Left cardiac atrium (tissue), 4 donors: ENCODE measurements at regions of chr6 and their contacts with region 1.

Region 1: GRCh38 chr6:97394160-97394748 is 111.2 kb upstream of the MMS22L start:
- DNase-seq: no peak
- ATAC-seq: peak; percentile 38 to 49

Region 2: DNA sequence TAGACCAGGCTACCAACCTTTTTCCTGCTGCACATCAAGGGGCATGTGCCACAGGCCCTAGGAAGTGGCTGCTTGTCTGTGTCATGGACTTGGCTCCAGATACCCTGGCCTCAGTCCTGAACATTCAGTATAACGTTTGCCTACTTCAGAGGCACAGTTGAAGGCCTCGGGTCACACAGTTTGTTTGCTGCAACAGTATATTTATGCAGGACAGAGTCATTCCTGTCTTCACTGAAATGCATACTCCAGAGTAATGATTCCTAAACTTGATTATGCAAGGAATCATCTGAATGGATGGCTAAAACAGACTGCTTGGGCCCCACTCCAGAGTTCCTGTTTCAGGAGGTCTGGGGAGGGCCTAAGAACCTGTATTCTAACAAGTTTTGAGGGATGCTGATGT is 320.4 kb before region 1 on chr6:
- intact Hi-C with region 1: loop called in 1 of 2 experiments (anchors 5 kb)
- DNase-seq: no peak
- ATAC-seq: no peak

Region 3: GRCh38 chr6:97186416-97186999 is 207.7 kb before region 1 on chr6:
- intact Hi-C with region 1: loop called (anchors 2 to 10 kb)
- DNase-seq: peak; percentile 70
- ATAC-seq: peak in 1 of 2 donors; percentile 43

Region 4: DNA sequence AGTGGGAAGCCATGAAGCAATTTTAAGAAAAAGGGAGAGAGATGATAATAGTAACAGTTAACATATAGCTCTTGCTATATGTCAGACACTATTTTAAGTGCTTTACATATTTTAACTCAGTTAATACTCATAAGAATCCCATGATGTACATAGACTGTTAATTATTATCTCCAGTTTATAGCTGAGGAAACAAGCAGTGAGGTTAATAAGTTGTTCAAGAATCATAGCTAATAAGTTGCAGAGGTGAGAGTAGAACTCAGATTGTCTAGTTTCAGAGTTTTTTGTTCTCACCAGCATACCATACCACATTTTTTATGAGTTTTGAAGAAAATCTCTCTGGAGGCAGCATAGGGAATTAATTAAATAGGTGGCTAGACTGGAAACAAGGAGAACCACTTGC is 33.4 kb after region 1 on chr6:
- intact Hi-C with region 1: no loop called
- DNase-seq: no peak
- ATAC-seq: no peak

Region 5: DNA sequence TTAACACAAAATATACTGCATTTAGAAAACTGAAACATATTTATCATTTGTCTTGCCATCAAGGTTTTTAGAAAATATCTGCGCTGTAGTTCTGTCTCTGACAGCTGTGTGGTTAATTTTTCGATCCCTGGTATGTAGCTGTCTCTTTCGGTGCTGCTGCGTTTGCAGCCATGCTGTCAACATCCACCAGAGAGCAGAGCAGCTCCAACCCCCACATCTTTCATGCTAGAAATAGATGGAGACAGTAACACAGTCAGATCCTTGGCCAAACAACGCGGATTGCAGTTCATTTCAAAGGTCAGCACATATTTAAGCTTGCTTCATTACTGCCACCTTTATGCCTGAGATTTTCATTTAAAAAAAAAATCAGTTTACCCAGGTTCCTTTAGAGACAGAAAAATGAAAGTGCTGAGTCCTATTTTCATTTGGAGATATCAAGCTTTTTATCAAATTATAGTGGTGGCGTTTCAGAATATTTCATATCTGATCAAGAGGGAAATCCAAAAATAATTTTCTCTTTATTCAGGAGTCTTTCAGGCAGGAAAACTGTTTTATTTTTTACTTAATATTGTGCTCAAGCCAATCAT is 46.4 kb after region 1 on chr6:
- intact Hi-C with region 1: no loop called
- DNase-seq: no peak
- ATAC-seq: peak; percentile 30 to 81

Region 6: GRCh38 chr6:97465877-97466561 is 71.8 kb after region 1 on chr6:
- intact Hi-C with region 1: no loop called
- DNase-seq: no peak
- ATAC-seq: no peak

Region 7: GRCh38 chr6:97594844-97595243 is 200.6 kb after region 1 on chr6:
- intact Hi-C with region 1: no loop called
- DNase-seq: no peak
- ATAC-seq: peak; percentile 95 to 97